ENCODE measurements at regions of chr6 and their contacts with region 1.

Region 1: DNA sequence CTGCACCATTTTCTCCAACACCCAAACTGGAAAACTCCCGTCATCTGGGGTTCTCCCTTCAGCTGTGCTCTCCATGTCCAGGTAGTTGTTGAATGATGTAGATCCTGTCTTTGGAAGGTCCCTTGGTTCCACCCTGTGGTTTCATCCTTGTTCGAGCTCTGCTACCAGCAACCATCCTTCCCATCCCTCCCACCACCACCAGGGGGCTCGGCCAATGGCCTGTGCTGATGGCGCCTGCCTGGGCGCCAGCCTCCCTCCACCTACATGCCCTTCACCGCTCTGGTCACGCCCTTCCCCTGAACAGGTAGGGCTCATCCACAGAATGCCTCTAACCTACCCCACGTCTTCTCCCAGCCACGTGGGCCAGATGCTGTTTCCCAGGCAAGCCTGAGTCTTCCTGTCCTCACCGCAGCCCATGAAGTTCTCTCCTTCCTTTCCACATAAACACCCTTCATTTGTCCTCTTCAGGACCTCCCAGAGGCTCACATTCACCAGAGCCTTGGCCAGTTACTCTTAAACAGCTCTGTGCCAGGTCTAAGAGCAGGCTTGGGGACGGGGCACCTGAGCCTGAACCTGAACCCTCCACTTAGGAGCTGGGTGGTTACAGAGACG is 75.1 kb upstream of the DUSP22 start:
- DNase-seq: no peak
- H3K4me3 Mint-ChIP-seq: no peak overlapping the region
- H3K27ac Mint-ChIP-seq: peak overlapping the region; percentile 11
- H3K4me1 Mint-ChIP-seq: peaks cover 65% of the 10 kb centered on the region
- H3K27me3 Mint-ChIP-seq: peaks cover 12% of the 10 kb centered on the region

Region 2: DNA sequence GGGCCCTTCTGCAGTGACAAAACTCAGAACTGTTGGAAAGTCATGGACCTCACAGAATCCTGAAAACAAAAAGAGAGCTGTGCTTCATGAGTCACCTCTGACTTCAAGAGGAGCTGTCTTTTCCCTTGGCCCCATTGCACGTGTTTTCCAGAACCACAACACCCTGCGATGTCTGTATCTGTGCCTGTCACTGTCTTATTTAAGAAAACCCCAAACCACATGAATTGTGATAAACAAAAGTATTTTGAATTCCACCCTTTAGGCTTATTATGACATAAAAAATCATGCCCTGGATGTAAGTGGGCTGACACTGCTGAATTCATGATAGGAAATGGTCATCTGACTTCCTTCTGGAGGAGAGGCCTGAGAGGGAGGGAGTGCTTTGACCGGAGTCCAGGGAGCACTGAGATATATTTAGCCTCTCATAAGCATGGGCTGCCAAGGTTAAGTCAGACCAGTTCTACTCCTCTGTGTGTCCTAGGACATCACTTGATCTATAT is 21.2 kb before region 1 on chr6:
- CTCF ChIA-PET with region 1: interaction called, 34 read pairs
- POLR2A ChIA-PET with region 1: interaction called, 59 read pairs
- DNase-seq: peak; percentile 49
- H3K4me3 Mint-ChIP-seq: no peak overlapping the region
- H3K27ac Mint-ChIP-seq: no peak overlapping the region
- H3K4me1 Mint-ChIP-seq: peaks cover 48% of the 10 kb centered on the region
- H3K27me3 Mint-ChIP-seq: peaks cover 3% of the 10 kb centered on the region

Region 3: DNA sequence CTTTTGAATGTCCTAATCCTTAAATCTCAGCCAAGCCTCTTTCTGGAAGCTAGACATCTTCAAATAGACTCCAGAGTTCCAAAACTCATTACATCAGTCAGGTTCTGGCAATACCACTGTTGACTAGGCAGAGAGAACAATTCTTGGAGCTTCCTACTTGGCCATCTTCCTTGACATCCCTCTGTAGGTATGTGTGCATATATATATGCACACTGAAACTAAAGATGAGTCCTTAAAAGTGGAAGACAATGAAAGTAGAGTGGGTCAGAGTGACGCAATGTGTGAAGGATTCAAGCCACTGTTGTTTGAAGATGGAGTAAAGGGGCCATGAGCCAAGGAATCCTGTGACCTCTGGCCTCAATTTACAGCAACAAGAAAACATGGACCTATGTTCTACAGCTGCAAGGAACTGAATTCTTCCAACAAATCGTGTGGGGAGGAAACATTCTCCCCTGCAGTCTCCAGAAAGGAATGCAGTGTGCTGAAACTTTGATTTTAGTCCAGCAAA is 56.5 kb after region 1 on chr6:
- CTCF ChIA-PET with region 1: no interaction called
- POLR2A ChIA-PET with region 1: no interaction called
- DNase-seq: no peak
- H3K4me3 Mint-ChIP-seq: no peak overlapping the region
- H3K27ac Mint-ChIP-seq: no peak overlapping the region
- H3K4me1 Mint-ChIP-seq: peaks cover 16% of the 10 kb centered on the region
- H3K27me3 Mint-ChIP-seq: peaks cover 21% of the 10 kb centered on the region